RWPE1 (cell line): ENCODE measurements at regions of chr5 and their contacts with region 1.

Region 1: DNA sequence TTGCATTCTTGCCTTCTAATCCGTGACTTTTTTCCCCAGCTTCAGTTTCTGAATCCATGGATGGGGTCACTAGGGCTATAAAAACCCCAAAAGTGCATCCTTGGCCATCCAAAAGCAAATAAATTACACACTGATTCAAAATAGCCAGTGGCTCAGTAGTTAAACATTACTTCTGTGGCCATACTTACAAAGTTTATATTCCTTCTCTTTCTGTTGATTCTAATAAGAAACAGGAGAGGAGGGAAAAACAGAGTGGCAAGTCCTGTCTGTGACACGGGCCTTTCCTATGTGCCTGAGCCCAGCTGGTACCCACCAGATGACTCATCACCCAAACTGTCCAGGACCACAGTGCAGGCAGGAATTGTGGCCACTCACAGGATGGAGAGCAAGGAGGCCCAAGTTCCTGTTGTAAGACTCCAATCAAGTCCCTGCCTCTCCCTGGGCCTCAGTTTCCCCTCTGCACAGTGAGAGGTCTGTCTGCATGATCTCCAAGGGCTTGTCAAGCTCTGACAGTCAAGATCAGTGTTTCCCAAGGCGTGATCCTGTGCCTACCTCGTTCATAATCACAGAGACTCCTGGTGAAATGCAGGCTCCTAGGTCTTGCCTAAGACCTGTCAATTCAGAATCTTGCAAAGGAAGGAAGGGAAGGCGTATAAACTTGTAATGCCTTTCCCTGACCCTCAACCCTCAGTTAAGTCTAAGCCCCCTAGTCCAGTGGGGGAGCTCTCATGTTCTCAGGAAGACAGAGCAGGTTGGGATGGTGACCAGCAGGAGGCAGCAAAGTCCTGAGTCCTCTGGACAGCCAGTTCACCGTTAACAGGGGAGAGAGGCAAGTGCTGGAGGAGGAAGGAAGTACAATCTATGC is 29.5 kb downstream of the TNIP1 start:
- DNase-seq: peak; percentile 57
- H3K27ac ChIP-seq: no peak overlapping the region
- CTCF ChIP-seq: no peak; the same call in 1 of the 2 replicates

Region 2: GRCh38 chr5:151002250-151002649 is 49.0 kb before region 1 on chr5:
- CTCF ChIA-PET with region 1: interaction called, 12 read pairs
- POLR2A ChIA-PET with region 1: no interaction called
- DNase-seq: peak; percentile 82
- H3K27ac ChIP-seq: no peak overlapping the region
- CTCF ChIP-seq: peak; percentile 70

Region 3: DNA sequence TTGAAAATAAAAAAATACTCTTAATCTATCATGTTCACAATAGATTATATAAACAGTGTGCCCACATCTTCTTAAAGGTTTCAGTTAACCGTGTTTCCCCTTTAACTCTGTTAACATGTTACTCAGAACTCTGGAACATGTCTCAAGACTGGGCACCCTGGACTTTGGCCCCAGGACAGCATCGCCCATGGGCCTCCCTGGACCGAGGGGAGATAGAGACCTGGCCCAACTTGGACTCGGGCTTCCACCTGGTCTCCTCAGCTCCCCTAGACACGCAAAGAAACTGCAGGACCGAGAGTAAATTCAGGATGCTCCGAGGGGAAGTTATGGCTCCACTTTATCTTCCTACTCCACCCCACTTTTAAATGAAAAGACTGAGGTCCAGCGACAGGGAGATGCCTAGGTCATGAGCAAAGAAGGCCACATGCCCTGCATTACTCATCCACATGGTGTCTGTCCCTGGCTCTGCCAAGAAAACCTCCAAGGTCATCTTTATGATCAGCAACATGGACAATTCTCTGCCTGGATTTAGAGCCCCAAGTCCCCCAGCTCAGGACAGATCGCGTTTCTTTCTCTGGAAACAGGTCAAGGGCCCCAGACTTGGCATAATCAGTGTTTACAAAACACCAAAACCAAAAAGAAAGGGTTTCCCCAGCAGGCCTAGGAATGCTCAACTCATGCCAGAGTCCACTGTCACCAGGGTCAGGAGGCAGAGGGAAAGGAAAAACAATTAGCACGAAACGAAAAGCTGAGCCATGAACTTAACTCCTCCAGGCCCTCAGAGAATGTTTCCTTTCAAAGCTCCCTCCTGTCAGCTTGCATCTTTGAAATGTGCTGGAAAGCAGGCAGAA is 13.5 kb before region 1 on chr5:
- CTCF ChIA-PET with region 1: interaction called, 24 read pairs
- POLR2A ChIA-PET with region 1: no interaction called
- DNase-seq: no peak
- H3K27ac ChIP-seq: 0 out of 2 replicates have a peak overlapping the region, but pooled peaks have one; percentile 1
- CTCF ChIP-seq: no peak

Region 4: DNA sequence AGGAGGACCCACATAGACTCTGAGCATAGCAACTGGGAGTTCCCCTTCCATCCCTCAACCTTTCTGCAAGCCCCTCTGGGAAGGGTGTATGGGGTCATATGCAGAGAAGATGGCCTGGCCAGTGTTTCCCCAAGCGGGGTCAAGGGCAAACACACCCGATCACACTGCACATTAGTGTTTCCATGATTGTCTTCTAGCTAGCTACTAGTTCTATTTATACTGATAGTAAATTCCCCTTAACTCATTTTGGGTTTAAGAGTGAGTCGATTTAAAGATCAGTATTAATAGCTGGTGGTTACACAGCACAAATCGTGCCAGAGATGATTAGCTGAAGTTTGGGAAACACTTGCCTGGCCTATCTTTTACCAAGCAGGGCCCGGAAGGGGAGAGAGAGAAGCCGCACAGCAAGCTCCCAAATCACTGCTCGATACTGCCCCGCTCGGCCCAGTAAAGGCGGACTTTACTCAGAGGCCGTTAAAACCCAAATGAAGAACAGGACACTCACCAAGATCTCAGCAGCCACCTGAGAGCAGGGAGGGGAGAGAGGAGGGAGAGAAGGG is 58.9 kb after region 1 on chr5:
- CTCF ChIA-PET with region 1: interaction called, 138 read pairs
- POLR2A ChIA-PET with region 1: interaction called, 3 read pairs
- DNase-seq: no peak
- H3K27ac ChIP-seq: no peak overlapping the region
- CTCF ChIP-seq: no peak

Region 5: DNA sequence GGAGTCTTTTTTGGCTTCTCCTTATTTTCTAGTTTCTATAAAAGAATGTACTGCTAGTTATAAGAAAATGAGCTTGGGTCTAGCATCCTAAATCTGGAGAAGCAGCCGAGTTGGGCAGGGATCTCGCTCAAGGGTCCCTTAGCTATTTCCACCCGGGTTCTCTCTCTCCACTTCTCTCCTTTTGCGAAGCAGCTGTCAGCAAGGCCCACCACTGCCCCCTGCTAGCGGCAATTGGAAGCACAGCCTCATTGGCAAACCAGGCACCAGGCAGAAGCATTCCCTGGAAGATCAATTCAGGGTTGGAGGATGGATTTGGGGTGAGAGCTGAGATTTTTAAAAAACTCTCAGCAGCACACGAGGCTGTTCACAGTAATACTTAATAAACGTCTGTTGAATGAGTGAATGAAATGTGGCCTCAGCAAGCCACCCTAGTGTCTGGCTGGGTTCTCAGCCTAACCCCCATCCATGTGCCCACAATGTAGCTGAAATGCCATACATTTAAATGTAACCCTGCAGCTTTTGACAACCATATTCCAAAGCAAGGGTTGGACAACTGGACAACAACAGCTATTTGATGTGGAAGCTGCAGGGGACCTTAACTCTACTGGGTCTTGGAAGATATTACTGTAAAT is 64.1 kb after region 1 on chr5:
- CTCF ChIA-PET with region 1: interaction called, 138 read pairs
- POLR2A ChIA-PET with region 1: interaction called, 3 read pairs
- DNase-seq: peak; percentile 87
- H3K27ac ChIP-seq: no peak overlapping the region
- CTCF ChIP-seq: peak; percentile 98

Region 6: GRCh38 chr5:151164686-151165392 is 113.5 kb after region 1 on chr5:
- CTCF ChIA-PET with region 1: interaction called, 12 read pairs
- POLR2A ChIA-PET with region 1: no interaction called
- DNase-seq: peak; percentile 85
- H3K27ac ChIP-seq: no peak overlapping the region
- CTCF ChIP-seq: peak; percentile 97